ENCODE measurements at regions of chrX and their contacts with region 1.

Region 1: GRCh38 chrX:103464774-103465117 is 54.5 kb downstream of the RAB40A start:
- DNase-seq: peak; percentile 44 to 71 (median 56)
- H3K4me3 ChIP-seq: peak overlapping the region; percentile 70
- H3K4me3 Mint-ChIP-seq: peak overlapping the region; percentile 80 to 96 (median 91)
- H3K27ac ChIP-seq: no peak overlapping the region
- H3K27ac Mint-ChIP-seq: peak overlapping the region in 5 of 8 donors; percentile 47 to 92 (median 72)
- H3K4me1 ChIP-seq: peaks cover 6% of the 10 kb centered on the region
- H3K4me1 Mint-ChIP-seq: peaks cover 5 to 24% (median 17%) of the 10 kb centered on the region in 3 donors
- H3K27me3 ChIP-seq: no peaks in the 10 kb centered on the region
- H3K27me3 Mint-ChIP-seq: peaks cover 1 to 9% of the 10 kb centered on the region in 2 donors

Region 2: DNA sequence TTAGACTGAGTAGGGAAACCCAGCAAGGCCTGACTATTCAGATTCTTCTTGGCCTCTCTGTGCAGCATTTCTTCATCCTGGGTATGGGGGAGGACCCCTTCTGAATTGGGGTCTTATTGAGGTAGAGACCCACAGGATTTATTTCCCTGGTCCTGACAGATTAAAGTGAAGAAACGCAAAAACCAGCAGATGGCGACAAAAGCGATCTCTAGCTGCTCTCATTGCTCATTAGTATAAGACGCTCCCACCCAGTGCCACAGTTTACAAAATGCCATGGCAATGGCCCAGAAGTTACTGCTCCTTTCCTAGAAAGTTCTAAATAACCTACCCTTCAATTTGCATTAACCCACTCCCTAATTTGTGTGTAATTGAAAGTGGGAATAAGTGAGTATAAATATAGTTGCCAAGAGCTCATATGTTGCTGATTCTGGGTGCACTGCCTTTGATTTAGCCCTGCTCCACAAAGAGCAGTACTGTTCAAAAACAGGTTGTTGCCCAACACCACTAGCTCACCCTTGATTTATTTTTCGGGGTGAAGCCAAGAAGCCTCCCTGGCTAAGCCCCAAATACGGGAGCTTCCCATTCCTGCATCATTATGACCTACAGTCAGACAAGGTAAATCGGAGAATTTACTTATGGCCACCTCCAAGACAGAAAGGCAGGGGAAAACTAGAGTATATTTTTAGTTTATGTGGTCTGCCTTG is 253.6 kb before region 1 on chrX:
- CTCF ChIA-PET with region 1: interaction called, 12 read pairs
- POLR2A ChIA-PET with region 1: no interaction called
- DNase-seq: peak; percentile 3 to 60 (median 33)
- H3K4me3 ChIP-seq: no peak overlapping the region
- H3K4me3 Mint-ChIP-seq: peak overlapping the region in 1 of 7 donors; percentile 40
- H3K27ac ChIP-seq: no peak overlapping the region
- H3K27ac Mint-ChIP-seq: peak overlapping the region in 1 of 8 donors; percentile 37
- H3K4me1 ChIP-seq: peaks cover 4% of the 10 kb centered on the region
- H3K4me1 Mint-ChIP-seq: peaks cover 5 to 12% (median 10%) of the 10 kb centered on the region in 3 donors
- H3K27me3 ChIP-seq: no peaks in the 10 kb centered on the region
- H3K27me3 Mint-ChIP-seq: peaks cover 0 to 9% of the 10 kb centered on the region in 2 donors

Region 3: GRCh38 chrX:103446665-103447302 is 18.0 kb before region 1 on chrX:
- CTCF ChIA-PET with region 1: no interaction called
- POLR2A ChIA-PET with region 1: no interaction called
- DNase-seq: no peak
- H3K4me3 ChIP-seq: no peak overlapping the region
- H3K4me3 Mint-ChIP-seq: no peak overlapping the region
- H3K27ac ChIP-seq: no peak overlapping the region
- H3K27ac Mint-ChIP-seq: no peak overlapping the region
- H3K4me1 ChIP-seq: no peaks in the 10 kb centered on the region
- H3K4me1 Mint-ChIP-seq: no peaks in the 10 kb centered on the region
- H3K27me3 ChIP-seq: no peaks in the 10 kb centered on the region
- H3K27me3 Mint-ChIP-seq: peaks cover 0 to 2% of the 10 kb centered on the region in 2 donors

Region 4: GRCh38 chrX:103488332-103488731 is 23.6 kb after region 1 on chrX:
- CTCF ChIA-PET with region 1: interaction called, 10 read pairs
- POLR2A ChIA-PET with region 1: no interaction called
- DNase-seq: no peak
- H3K4me3 ChIP-seq: no peak overlapping the region
- H3K4me3 Mint-ChIP-seq: no peak overlapping the region
- H3K27ac ChIP-seq: no peak overlapping the region
- H3K27ac Mint-ChIP-seq: no peak overlapping the region
- H3K4me1 ChIP-seq: no peaks in the 10 kb centered on the region
- H3K4me1 Mint-ChIP-seq: peaks cover 0 to 3% (median 0%) of the 10 kb centered on the region in 3 donors
- H3K27me3 ChIP-seq: no peaks in the 10 kb centered on the region
- H3K27me3 Mint-ChIP-seq: peaks cover under 1 to 8% of the 10 kb centered on the region in 2 donors

Region 5: DNA sequence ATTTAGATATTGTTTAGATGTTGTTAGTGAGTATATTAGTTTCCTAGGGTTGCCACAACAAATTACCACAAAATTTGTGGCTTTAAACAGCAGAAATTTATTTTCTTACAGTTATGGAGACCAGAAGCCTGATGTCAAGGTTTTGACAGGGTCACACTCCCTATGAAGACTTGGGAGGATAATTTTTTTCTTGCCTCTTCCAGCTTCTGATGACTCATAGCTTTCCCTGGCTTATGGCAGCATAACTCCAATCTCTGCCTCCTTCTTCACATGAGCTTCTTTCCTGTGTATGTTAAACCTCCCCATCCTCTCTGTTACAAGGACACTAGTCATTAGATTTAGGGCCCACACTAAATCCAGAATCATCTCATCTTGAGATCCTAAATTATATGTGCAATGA is 75.4 kb after region 1 on chrX:
- CTCF ChIA-PET with region 1: no interaction called
- POLR2A ChIA-PET with region 1: no interaction called
- DNase-seq: no peak
- H3K4me3 ChIP-seq: no peak overlapping the region
- H3K4me3 Mint-ChIP-seq: no peak overlapping the region
- H3K27ac ChIP-seq: no peak overlapping the region
- H3K27ac Mint-ChIP-seq: peak overlapping the region in 1 of 8 donors; percentile 70
- H3K4me1 ChIP-seq: no peaks in the 10 kb centered on the region
- H3K4me1 Mint-ChIP-seq: no peaks in the 10 kb centered on the region
- H3K27me3 ChIP-seq: no peaks in the 10 kb centered on the region
- H3K27me3 Mint-ChIP-seq: peaks cover 4 to 5% of the 10 kb centered on the region in 2 donors

Region 6: GRCh38 chrX:104679175-104679574 is 1214.4 kb after region 1 on chrX:
- CTCF ChIA-PET with region 1: no interaction called
- POLR2A ChIA-PET with region 1: no interaction called
- DNase-seq: no peak
- H3K4me3 ChIP-seq: no peak overlapping the region
- H3K4me3 Mint-ChIP-seq: no peak overlapping the region
- H3K27ac ChIP-seq: no peak overlapping the region
- H3K27ac Mint-ChIP-seq: no peak overlapping the region
- H3K4me1 ChIP-seq: no peaks in the 10 kb centered on the region
- H3K4me1 Mint-ChIP-seq: no peaks in the 10 kb centered on the region
- H3K27me3 ChIP-seq: no peaks in the 10 kb centered on the region
- H3K27me3 Mint-ChIP-seq: no peaks in the 10 kb centered on the region